Aorta (tissue), 5 donors: ENCODE measurements at regions of chr3 and their contacts with region 1.

Region 1: DNA sequence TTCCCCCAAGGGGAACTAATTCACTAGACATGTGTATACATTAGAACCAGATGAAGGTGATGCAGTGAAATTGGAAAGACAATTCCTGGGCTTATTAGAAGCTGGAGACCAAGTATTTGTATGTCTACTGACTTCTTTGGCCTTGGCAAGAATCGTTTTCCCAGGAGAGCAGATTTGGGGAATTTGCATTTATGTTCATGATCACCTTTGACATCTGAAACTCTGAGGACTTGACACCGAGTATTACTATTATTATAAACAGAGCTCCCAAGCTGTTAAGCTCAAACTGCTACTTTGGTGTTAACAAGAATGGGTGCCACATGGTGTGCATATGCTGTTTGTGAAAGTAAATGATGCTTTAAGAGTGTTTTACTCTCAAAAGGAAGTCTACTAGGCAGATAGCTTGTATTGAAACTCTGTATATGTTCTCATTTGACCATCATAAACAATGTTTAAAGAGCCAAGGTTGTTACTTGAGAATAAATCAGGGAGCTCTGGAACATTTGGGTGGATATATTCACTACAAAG is 519.8 kb upstream of the GOLIM4 start:
- DNase-seq: no peak
- ATAC-seq: no peak
- H3K4me3 ChIP-seq: no peak overlapping the region
- H3K27ac ChIP-seq: no peak overlapping the region
- H3K4me1 ChIP-seq: no peaks in the 10 kb centered on the region
- H3K27me3 ChIP-seq: peaks cover 0 to 5% of the 10 kb centered on the region in 2 donors

Region 2: DNA sequence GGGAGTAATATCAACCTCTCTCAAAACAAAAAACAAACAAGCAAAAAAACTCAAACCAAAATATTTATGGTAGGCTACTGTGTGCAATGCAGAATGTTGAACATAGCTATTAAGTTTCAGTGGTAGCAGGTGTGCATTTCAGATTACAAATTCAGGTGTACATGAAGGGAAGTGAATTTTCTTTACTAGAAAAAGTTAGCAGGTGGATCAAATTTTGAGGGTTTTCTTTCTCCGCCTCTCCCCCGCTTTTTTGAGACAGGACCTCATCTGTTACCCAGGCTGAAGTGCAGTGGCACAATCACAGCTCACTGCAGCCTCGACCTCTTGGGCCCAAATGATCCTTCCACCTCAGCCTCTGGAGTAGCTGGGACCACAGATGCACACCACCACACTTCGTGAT is 410.1 kb before region 1 on chr3:
- intact Hi-C with region 1: loop called in 1 of 2 experiments (anchors 10 kb)
- DNase-seq: no peak
- ATAC-seq: no peak
- H3K4me3 ChIP-seq: no peak overlapping the region
- H3K27ac ChIP-seq: no peak overlapping the region
- H3K4me1 ChIP-seq: no peaks in the 10 kb centered on the region
- H3K27me3 ChIP-seq: no peaks in the 10 kb centered on the region